T-cell (primary cell): ENCODE measurements at regions of chr17 and their contacts with region 1.

Region 1: GRCh38 chr17:8060274-8060673 is 21.4 kb downstream of the ALOX15B start:
- DNase-seq: peak in 27 of 35 experiments; percentile 16 to 85 (median 42)
- ATAC-seq: peak; percentile 48 to 67 (median 54)
- H3K4me3 ChIP-seq: no peak overlapping the region
- H3K4me3 Mint-ChIP-seq: no peak overlapping the region
- H3K27ac ChIP-seq: no peak overlapping the region
- H3K27ac Mint-ChIP-seq: no peak overlapping the region
- H3K4me1 ChIP-seq: peaks cover 0 to 13% of the 10 kb centered on the region in 2 experiments
- H3K4me1 Mint-ChIP-seq: peaks cover 0 to 22% (median 6%) of the 10 kb centered on the region in 3 donors
- H3K27me3 ChIP-seq: peaks cover 2 to 38% of the 10 kb centered on the region in 2 experiments
- H3K27me3 Mint-ChIP-seq: peaks cover 42 to 70% of the 10 kb centered on the region in 2 donors

Region 2: GRCh38 chr17:8041249-8041928 is 18.9 kb before region 1 on chr17:
- CTCF ChIA-PET with region 1: no interaction called
- POLR2A ChIA-PET with region 1: no interaction called
- DNase-seq: peak in 23 of 35 experiments; percentile 12 to 68 (median 23)
- ATAC-seq: peak in 3 of 4 experiments; percentile 23 to 45 (median 42)
- H3K4me3 ChIP-seq: no peak overlapping the region
- H3K4me3 Mint-ChIP-seq: no peak overlapping the region
- H3K27ac ChIP-seq: no peak overlapping the region
- H3K27ac Mint-ChIP-seq: no peak overlapping the region
- H3K4me1 ChIP-seq: peaks cover 0 to 5% of the 10 kb centered on the region in 2 experiments
- H3K4me1 Mint-ChIP-seq: peaks cover 2 to 9% (median 3%) of the 10 kb centered on the region in 3 donors
- H3K27me3 ChIP-seq: peaks cover 0 to 54% of the 10 kb centered on the region in 2 experiments
- H3K27me3 Mint-ChIP-seq: peaks cover 16 to 33% of the 10 kb centered on the region in 2 donors

Region 3: GRCh38 chr17:8073627-8074484 is 13.6 kb after region 1 on chr17:
- CTCF ChIA-PET with region 1: interaction called, 8 to 10 read pairs
- POLR2A ChIA-PET with region 1: no interaction called
- DNase-seq: peak; percentile 65 to 94 (median 81)
- ATAC-seq: peak; percentile 78 to 93 (median 84)
- H3K4me3 ChIP-seq: peak overlapping the region in 1 of 2 donors; percentile 36
- H3K4me3 Mint-ChIP-seq: peak overlapping the region; percentile 63 to 71 (median 66)
- H3K27ac ChIP-seq: no peak overlapping the region
- H3K27ac Mint-ChIP-seq: peak overlapping the region in 1 of 2 donors; percentile 84
- H3K4me1 ChIP-seq: peaks cover 4 to 31% of the 10 kb centered on the region in 2 experiments
- H3K4me1 Mint-ChIP-seq: peaks cover 23 to 28% (median 25%) of the 10 kb centered on the region in 3 donors
- H3K27me3 ChIP-seq: peaks cover 8 to 71% of the 10 kb centered on the region in 2 experiments
- H3K27me3 Mint-ChIP-seq: peaks cover 36 to 49% of the 10 kb centered on the region in 2 donors

Region 4: DNA sequence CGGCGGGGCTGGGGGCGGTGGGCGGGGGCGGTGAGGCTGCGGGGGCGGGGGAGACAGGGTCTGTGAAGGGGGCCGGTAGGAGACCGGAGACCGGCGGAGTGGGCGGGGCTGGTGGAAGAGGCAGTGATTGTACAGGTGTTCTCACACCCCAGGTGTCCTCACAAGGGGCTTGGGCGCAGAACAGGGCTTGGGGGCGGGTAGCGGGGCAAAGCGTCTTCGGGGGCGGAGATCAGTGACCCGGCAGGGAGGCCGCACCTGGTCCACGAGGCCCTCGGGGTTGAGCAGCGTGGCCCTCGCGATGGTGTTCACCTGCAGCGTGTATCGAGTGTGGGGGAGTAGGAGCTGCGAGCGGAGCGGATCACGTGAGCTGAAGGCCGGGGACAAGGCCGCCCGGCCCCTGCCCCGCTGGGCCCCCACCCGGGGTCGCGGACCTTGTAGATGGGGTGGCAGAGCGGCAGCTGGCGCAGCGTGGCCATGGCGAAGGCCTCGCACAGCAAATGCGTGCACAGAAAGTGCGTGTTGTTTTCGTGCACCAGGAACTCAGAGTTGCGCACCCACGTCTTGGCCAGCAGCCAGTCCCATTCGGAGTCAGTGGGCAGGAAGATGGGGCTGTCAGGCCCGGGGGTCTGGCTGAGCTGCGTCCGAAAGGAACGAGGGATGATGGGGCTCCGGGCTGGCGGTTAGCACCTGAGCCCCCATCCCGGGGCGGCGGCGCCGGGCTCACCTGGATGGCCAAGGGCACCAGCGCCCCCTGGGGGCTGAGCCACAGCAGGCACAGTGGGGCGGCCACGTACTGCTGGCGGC is 49.6 kb after region 1 on chr17:
- CTCF ChIA-PET with region 1: interaction called, 6 to 10 read pairs
- POLR2A ChIA-PET with region 1: no interaction called
- DNase-seq: peak; percentile 60 to 90 (median 77)
- ATAC-seq: peak; percentile 95 to 98 (median 98)
- H3K4me3 ChIP-seq: peak overlapping the region; percentile 46 to 59
- H3K4me3 Mint-ChIP-seq: peak overlapping the region; percentile 60 to 73 (median 68)
- H3K27ac ChIP-seq: no peak overlapping the region
- H3K27ac Mint-ChIP-seq: no peak overlapping the region
- H3K4me1 ChIP-seq: peaks cover 0 to 10% of the 10 kb centered on the region in 2 experiments
- H3K4me1 Mint-ChIP-seq: peaks cover 0 to 4% (median 4%) of the 10 kb centered on the region in 3 donors
- H3K27me3 ChIP-seq: peaks cover 0 to 63% of the 10 kb centered on the region in 2 experiments
- H3K27me3 Mint-ChIP-seq: peaks cover 14 to 29% of the 10 kb centered on the region in 2 donors

Region 5: GRCh38 chr17:8264836-8265542 is 204.7 kb after region 1 on chr17:
- CTCF ChIA-PET with region 1: no interaction called
- POLR2A ChIA-PET with region 1: no interaction called
- DNase-seq: no peak
- ATAC-seq: no peak
- H3K4me3 ChIP-seq: no peak overlapping the region
- H3K4me3 Mint-ChIP-seq: no peak overlapping the region
- H3K27ac ChIP-seq: no peak overlapping the region
- H3K27ac Mint-ChIP-seq: no peak overlapping the region
- H3K4me1 ChIP-seq: no peaks in the 10 kb centered on the region
- H3K4me1 Mint-ChIP-seq: no peaks in the 10 kb centered on the region
- H3K27me3 ChIP-seq: no peaks in the 10 kb centered on the region
- H3K27me3 Mint-ChIP-seq: no peaks in the 10 kb centered on the region

Region 6: GRCh38 chr17:8314797-8315763 is 254.8 kb after region 1 on chr17:
- CTCF ChIA-PET with region 1: no interaction called
- POLR2A ChIA-PET with region 1: no interaction called
- DNase-seq: no peak
- ATAC-seq: no peak
- H3K4me3 ChIP-seq: no peak overlapping the region
- H3K4me3 Mint-ChIP-seq: no peak overlapping the region
- H3K27ac ChIP-seq: no peak overlapping the region
- H3K27ac Mint-ChIP-seq: no peak overlapping the region
- H3K4me1 ChIP-seq: peaks cover 0 to 6% of the 10 kb centered on the region in 2 experiments
- H3K4me1 Mint-ChIP-seq: peaks cover 0 to under 1% (median 0%) of the 10 kb centered on the region in 3 donors
- H3K27me3 ChIP-seq: peaks cover 0 to 67% of the 10 kb centered on the region in 2 experiments
- H3K27me3 Mint-ChIP-seq: peaks cover 5 to 29% of the 10 kb centered on the region in 2 donors